Cardiac septum (tissue), 1 donor: ENCODE measurements at regions of chr11 and their contacts with region 1.

Region 1: DNA sequence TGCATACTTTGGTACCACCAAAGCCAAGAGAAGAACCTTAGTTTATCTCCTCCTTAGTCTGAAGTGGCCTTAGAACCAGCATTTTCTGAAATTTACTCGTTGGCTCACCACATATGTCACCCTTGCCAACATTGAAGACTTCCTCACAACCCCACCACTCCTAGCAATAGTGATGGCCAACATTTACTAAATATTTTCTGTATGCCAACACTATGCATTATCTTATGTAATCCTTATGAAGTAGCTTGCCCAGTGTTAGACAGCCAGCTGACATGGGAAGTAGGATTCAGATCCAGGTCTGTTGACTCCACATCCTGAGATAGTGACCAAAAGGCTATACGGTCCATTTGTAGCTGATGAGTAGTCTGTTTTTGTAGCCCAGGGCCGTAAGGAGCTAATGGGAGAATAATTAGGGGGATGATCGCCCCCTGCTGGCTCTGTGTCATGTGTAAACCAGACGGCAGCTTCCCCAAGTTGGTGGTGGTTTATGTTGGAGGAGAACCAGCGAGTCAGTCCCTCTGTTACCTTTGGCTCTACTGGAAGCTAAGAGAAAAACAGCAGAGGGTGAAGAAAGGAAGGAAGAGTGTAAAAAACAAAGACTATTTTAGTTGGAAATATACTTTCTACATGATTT is 120.5 kb upstream of the RASSF10 start:
- DNase-seq: peak; percentile 85

Region 2: DNA sequence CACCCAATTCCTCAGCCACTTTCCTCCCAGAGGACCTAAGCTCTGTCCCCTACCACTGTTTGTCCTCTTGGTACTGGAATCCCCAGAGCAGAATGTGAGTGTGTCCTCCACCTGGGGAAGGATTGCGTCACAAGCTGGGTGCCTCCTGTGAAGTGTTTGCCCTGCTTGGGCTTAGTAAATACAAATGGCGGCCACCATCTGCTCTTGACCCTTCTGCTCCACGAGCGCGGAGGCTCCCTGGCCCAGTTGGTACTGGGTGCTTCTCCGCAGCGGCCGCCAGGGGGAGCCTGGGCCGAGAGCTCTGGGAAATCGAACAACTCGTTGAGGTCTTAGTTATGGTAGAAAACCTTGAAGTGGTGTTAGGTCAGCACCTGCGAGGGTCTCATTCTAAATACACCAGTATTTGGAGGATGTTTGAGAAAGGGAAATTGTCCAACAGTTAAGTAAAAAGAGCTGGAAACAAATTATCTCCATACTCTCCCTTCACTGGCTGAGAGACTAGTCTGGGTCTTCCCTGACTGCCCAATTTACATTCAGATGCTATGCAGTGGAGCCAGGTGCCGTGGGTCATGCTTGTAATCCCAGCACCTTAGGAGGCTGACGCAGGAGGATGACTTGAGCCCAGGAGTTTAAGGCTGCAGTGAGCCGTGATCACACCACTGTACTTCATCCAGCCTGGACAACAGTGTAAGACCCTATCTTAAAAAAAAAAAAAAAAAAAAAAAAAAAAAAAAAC is 289.1 kb before region 1 on chr11:
- intact Hi-C with region 1: loop called (anchors 2 kb)
- DNase-seq: peak; percentile 75